WTC11 (cell line): ENCODE measurements at regions of chr9 and their contacts with region 1.

Region 1: DNA sequence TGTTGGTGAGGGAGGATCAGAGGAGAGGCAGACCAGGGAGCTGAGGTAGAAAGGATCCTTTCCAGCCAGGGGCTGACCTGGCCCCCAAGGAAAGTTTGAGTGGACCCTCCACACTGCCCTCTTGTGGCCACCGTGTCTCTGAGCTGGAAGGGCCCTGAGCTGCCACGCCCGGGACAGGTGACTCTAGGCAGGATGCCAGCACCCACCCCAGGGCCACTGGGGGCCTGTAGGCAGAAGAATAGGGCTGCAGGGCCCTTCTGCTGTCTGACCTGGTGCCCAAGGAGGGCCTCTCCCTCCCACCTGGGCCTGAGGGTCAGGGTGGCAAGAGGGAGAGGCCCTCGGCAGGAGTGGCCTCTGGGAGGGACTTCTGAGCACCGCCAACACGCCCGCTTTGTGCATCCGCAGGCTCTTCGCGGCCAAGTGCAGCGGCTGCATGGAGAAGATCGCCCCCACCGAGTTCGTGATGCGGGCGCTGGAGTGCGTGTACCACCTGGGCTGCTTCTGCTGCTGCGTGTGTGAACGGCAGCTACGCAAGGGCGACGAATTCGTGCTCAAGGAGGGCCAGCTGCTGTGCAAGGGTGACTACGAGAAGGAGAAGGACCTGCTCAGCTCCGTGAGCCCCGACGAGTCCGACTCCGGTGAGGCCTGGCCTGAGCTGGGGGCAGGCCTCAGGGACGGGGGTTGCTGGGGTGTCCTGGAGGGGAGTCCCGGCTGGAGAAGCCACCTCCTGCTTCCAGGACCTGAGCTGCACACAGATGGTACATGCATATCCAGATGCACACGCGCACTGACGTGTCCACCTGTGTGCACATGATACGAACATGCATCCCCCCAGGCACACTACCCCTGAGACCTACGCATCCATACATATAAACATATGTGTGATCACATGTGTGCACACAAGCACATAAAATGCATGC is 77.0 kb downstream of the LMX1B start:
- DNase-seq: peak; percentile 86
- ATAC-seq: peak; percentile 82
- H3K4me3 Mint-ChIP-seq: no peak overlapping the region
- H3K27ac Mint-ChIP-seq: no peak overlapping the region
- H3K4me1 Mint-ChIP-seq: peaks cover 19% of the 10 kb centered on the region
- H3K27me3 Mint-ChIP-seq: peaks cover 42% of the 10 kb centered on the region
- CTCF ChIP-seq: peak; percentile 80

Region 2: DNA sequence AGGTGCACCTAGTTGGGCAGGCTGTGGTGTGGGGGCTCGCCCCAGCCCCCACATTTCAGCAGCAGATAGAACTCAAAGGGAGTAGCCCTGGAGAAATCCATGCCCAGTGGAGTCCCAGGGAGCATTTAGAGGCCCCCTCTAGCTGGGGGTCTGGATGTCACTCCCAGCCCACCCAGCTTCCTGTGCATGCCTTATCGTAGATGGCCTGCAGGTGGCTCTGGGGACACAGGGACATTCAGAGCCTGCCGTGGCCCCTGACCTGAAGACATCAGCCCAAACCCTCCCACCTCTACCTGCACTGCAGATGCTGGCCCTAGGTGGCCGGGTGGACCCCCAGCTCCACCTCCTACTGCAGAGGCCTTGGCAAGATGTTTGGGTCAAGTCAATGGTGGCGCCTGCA is 126.0 kb before region 1 on chr9:
- CTCF ChIA-PET with region 1: interaction called, 11 read pairs
- POLR2A ChIA-PET with region 1: no interaction called
- DNase-seq: peak; percentile 61
- ATAC-seq: peak; percentile 88
- H3K4me3 Mint-ChIP-seq: no peak overlapping the region
- H3K27ac Mint-ChIP-seq: no peak overlapping the region
- H3K4me1 Mint-ChIP-seq: no peaks in the 10 kb centered on the region
- H3K27me3 Mint-ChIP-seq: no peaks in the 10 kb centered on the region; the same call in 1 of the 2 replicates
- CTCF ChIP-seq: peak; percentile 37; the same call in 1 of the 2 replicates

Region 3: GRCh38 chr9:126599047-126599650 is 91.5 kb before region 1 on chr9:
- CTCF ChIA-PET with region 1: interaction called, 19 read pairs
- POLR2A ChIA-PET with region 1: no interaction called
- DNase-seq: peak; percentile 53
- ATAC-seq: peak; percentile 67
- H3K4me3 Mint-ChIP-seq: no peak overlapping the region
- H3K27ac Mint-ChIP-seq: no peak overlapping the region
- H3K4me1 Mint-ChIP-seq: no peaks in the 10 kb centered on the region
- H3K27me3 Mint-ChIP-seq: no peaks in the 10 kb centered on the region
- CTCF ChIP-seq: 0 out of 2 replicates have a peak, but pooled peaks have one; percentile 17

Region 4: GRCh38 chr9:126611592-126612325 is 78.9 kb before region 1 on chr9:
- CTCF ChIA-PET with region 1: interaction called, 47 read pairs
- POLR2A ChIA-PET with region 1: no interaction called
- DNase-seq: peak; percentile 94
- ATAC-seq: peak; percentile 64
- H3K4me3 Mint-ChIP-seq: peak overlapping the region; percentile 58
- H3K27ac Mint-ChIP-seq: no peak overlapping the region
- H3K4me1 Mint-ChIP-seq: peaks cover 32% of the 10 kb centered on the region
- H3K27me3 Mint-ChIP-seq: peaks cover 94% of the 10 kb centered on the region
- CTCF ChIP-seq: peak; percentile 81

Region 5: DNA sequence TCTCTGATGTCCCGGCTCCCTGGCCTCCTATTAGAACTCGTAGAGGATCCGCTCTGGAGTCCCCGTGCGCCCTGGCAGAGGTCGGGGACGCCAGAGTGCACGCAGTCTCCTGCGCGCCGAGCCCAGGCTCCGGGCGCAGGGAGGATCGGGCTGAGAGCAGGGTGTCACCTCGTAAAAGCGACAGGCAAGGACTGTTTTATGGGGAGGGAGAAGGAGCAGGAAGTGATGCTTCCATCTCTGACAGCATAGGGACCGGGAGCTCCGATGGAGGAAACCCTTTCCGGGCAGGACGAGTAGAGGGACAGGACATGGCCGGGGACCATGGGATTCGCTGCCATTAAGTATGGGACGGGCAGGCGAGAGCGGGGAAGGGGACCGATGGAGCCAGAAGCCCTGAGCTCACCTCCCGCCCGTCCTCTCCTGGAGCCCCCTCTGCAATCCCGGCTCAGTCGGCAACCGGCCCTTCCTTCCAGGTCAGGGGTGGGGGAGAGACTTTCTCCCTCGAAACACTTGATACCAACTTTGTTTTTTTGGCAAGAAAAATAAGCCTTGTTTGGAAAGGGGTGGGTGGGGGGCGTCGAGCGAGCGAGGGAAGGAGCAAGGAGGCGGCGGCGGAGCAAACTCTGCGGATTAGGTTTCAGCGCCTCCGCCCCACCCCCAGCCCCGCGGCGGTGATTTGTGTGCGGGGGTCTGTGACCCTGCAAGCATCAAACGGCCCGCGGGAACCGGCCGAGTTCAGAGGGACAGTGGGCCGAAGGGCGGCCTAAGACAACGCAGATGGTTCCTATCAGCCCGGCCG is 64.4 kb before region 1 on chr9:
- CTCF ChIA-PET with region 1: interaction called, 83 read pairs
- POLR2A ChIA-PET with region 1: no interaction called
- DNase-seq: peak; percentile 55
- ATAC-seq: peak; percentile 11
- H3K4me3 Mint-ChIP-seq: peak overlapping the region; percentile 72
- H3K27ac Mint-ChIP-seq: no peak overlapping the region
- H3K4me1 Mint-ChIP-seq: peaks cover 54% of the 10 kb centered on the region
- H3K27me3 Mint-ChIP-seq: peaks cover 100% of the 10 kb centered on the region
- CTCF ChIP-seq: no peak

Region 6: DNA sequence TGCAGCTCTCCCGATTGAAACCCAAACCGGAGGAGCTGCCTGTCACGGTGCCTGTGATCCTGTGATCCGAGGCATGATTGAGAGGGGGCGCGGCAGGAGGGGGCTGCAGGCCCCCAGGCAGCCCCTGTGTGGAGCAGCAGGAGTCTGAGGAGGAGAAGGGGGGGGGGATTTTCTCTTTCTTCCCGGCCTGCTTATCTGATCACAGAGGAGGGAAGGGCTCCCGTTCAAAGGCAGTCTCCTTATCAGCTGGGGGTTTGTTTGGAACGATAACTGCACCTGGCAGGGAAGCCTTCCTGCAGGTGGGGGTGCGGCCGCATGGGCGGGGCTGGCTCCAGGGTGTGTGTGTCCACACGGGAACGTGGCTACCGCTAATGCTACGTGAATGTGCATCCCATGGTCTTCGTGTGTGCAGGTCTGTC is 38.5 kb before region 1 on chr9:
- CTCF ChIA-PET with region 1: interaction called, 20 read pairs
- POLR2A ChIA-PET with region 1: no interaction called
- DNase-seq: no peak
- ATAC-seq: peak; percentile 26; the same call in 1 of the 2 replicates
- H3K4me3 Mint-ChIP-seq: no peak overlapping the region
- H3K27ac Mint-ChIP-seq: no peak overlapping the region
- H3K4me1 Mint-ChIP-seq: peaks cover 28% of the 10 kb centered on the region
- H3K27me3 Mint-ChIP-seq: peaks cover 8% of the 10 kb centered on the region; the same call in 1 of the 2 replicates
- CTCF ChIP-seq: no peak

Region 7: GRCh38 chr9:126673689-126674364 is 16.9 kb before region 1 on chr9:
- CTCF ChIA-PET with region 1: interaction called, 93 read pairs
- POLR2A ChIA-PET with region 1: interaction called, 3 read pairs
- DNase-seq: peak; percentile 50
- ATAC-seq: no peak
- H3K4me3 Mint-ChIP-seq: peak overlapping the region; percentile 24; the same call in 1 of the 2 replicates
- H3K27ac Mint-ChIP-seq: no peak overlapping the region
- H3K4me1 Mint-ChIP-seq: peaks cover 49% of the 10 kb centered on the region
- H3K27me3 Mint-ChIP-seq: peaks cover 70% of the 10 kb centered on the region
- CTCF ChIP-seq: no peak

Region 8: GRCh38 chr9:126822278-126822677 is 131.6 kb after region 1 on chr9:
- CTCF ChIA-PET with region 1: no interaction called
- POLR2A ChIA-PET with region 1: no interaction called
- DNase-seq: no peak
- ATAC-seq: no peak
- H3K4me3 Mint-ChIP-seq: no peak overlapping the region
- H3K27ac Mint-ChIP-seq: no peak overlapping the region
- H3K4me1 Mint-ChIP-seq: no peaks in the 10 kb centered on the region
- H3K27me3 Mint-ChIP-seq: no peaks in the 10 kb centered on the region
- CTCF ChIP-seq: no peak

Region 9: DNA sequence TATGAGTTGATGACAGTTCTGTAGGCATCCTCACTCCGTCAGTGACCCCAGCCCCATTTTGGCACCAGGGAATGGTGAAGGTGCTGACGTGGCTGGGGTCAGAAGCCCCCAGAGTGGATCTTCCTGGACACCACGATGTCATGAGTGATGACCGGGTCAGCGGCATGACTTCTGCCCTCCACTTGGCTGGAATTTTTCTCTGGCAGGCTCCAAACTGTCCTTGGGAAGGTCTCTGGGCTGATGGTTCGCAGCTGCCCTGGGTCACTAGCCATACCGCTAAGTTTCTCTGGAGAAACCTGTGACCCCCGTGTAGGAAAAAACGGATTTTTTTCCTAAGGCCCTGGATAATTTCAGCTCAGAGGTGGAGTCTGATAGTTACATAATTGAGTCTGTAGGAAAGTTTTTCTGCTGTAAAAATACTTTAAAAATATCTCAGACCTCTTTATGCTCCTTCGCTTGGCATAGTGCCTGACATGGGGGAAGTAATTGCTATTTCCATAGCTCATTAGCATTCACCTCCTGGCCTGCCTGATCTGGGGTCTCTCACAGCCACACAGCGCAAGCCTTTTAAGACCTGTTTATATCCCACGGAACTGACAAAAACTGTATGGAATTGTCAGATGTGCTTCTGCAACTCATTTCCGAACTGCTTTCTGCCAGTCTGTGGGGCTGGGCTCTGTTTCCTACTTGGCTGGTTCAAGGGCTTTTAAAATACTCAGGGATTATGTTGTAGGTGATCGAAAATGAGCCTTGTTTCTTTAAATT is 362.5 kb after region 1 on chr9:
- CTCF ChIA-PET with region 1: no interaction called
- POLR2A ChIA-PET with region 1: no interaction called
- DNase-seq: no peak
- ATAC-seq: no peak
- H3K4me3 Mint-ChIP-seq: no peak overlapping the region
- H3K27ac Mint-ChIP-seq: peak overlapping the region; percentile 26; the same call in 1 of the 2 replicates
- H3K4me1 Mint-ChIP-seq: peaks cover 7% of the 10 kb centered on the region
- H3K27me3 Mint-ChIP-seq: no peaks in the 10 kb centered on the region
- CTCF ChIP-seq: no peak